Cardiac septum (tissue), 1 donor: ENCODE measurements at regions of chr14 and their contacts with region 1.

Region 1: GRCh38 chr14:26394150-26394810 is 203.6 kb downstream of the NOVA1 start:
- DNase-seq: no peak

Region 2: GRCh38 chr14:25929881-25930615 is 464.2 kb before region 1 on chr14:
- intact Hi-C with region 1: no loop called
- DNase-seq: no peak

Region 3: GRCh38 chr14:26917086-26917485 is 522.8 kb after region 1 on chr14:
- intact Hi-C with region 1: loop called (anchors 10 kb)
- DNase-seq: no peak

Region 4: DNA sequence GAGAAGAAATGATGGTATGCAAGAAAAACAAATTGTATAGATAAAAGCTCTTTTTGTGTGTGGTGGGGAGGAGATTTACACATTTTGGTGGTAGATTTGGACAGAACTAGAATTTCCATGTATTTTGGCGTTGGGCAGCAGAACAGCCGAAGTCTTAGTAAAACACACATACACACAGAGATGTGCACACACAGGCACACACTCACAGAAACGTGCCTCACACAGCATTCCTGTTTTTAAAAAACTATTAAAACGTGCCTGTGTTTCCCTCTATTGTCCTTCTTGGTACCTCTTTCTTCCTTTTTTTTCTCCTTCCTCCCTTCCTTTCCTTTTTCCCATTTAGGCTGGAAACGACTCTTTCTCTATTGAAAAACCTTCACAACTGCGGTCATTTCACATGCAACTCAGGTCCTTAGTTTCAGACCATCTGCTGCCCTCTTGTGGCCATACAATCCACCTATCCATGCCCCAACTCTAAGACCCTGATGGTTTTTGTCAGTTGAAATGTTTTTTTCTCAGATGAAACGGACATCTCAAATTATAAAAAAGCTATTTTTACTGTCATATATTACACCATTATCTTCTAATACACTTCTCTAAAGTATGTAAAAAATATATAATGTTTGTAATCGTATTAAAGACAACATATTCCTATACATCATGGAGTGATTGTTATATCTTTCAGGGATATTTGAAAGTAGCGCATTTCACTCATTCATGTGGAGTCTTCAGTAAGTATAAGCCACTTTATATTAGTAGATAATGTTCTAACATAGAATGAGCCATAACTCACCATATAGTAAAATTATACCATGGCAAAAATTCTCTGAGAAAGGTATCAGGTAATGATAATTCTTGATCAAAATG is 590.3 kb after region 1 on chr14:
- intact Hi-C with region 1: loop called (anchors 5 kb)
- DNase-seq: no peak